Mammary epithelial cell (primary cell): ENCODE measurements at regions of chr10 and their contacts with region 1.

Region 1: GRCh38 chr10:113126229-113127201 is 176.5 kb downstream of the TCF7L2 start:
- DNase-seq: peak; percentile 63
- H3K4me3 ChIP-seq: peak overlapping the region; percentile 21 to 38 (median 29)
- H3K27ac ChIP-seq: peak overlapping the region; percentile 7
- H3K4me1 ChIP-seq: peaks cover 9% of the 10 kb centered on the region
- H3K27me3 ChIP-seq: no peaks in the 10 kb centered on the region
- CTCF ChIP-seq: peak; percentile 49 to 60

Region 2: GRCh38 chr10:112471878-112472487 is 654.5 kb before region 1 on chr10:
- CTCF ChIA-PET with region 1: no interaction called
- dilution Hi-C with region 1: no loop called
- in situ Hi-C with region 1: no loop called
- intact Hi-C with region 1: loop called (anchors 1 kb)
- DNase-seq: peak; percentile 28
- H3K4me3 ChIP-seq: no peak overlapping the region
- H3K27ac ChIP-seq: no peak overlapping the region
- H3K4me1 ChIP-seq: no peaks in the 10 kb centered on the region
- H3K27me3 ChIP-seq: no peaks in the 10 kb centered on the region
- CTCF ChIP-seq: peak; percentile 67 to 68

Region 3: GRCh38 chr10:112689299-112690072 is 437.0 kb before region 1 on chr10:
- CTCF ChIA-PET with region 1: no interaction called
- dilution Hi-C with region 1: no loop called
- in situ Hi-C with region 1: no loop called
- intact Hi-C with region 1: loop called (anchors 1 kb)
- DNase-seq: peak; percentile 1
- H3K4me3 ChIP-seq: no peak overlapping the region
- H3K27ac ChIP-seq: no peak overlapping the region
- H3K4me1 ChIP-seq: peaks cover 2% of the 10 kb centered on the region
- H3K27me3 ChIP-seq: no peaks in the 10 kb centered on the region
- CTCF ChIP-seq: peak; percentile 18 to 44

Region 4: DNA sequence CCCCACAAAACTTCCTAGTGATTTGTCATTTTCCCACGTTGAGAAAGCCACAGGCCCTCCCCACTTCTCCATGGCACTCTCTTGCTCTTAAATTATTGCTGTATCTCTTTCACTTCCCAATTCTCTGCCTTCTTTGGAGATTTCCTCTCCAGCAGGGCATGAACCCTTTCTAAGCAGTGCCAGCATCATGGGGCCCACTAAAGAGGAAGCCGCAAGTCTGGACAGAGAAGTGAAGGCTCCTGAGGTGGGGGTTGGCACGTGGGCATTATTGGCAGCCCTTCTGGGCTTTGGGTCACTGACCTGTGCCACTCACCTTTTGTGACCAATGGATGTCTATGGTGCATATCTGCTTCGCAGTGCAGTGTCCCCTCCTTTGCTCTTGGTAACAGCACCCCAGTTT is 274.2 kb before region 1 on chr10:
- CTCF ChIA-PET with region 1: no interaction called
- dilution Hi-C with region 1: no loop called
- in situ Hi-C with region 1: no loop called
- intact Hi-C with region 1: loop called (anchors 10 kb)
- DNase-seq: no peak
- H3K4me3 ChIP-seq: no peak overlapping the region
- H3K27ac ChIP-seq: no peak overlapping the region
- H3K4me1 ChIP-seq: peaks cover 3% of the 10 kb centered on the region
- H3K27me3 ChIP-seq: peaks cover 3% of the 10 kb centered on the region
- CTCF ChIP-seq: no peak

Region 5: GRCh38 chr10:113000876-113001598 is 125.5 kb before region 1 on chr10:
- CTCF ChIA-PET with region 1: no interaction called
- dilution Hi-C with region 1: no loop called
- in situ Hi-C with region 1: no loop called
- intact Hi-C with region 1: loop called (anchors 5 kb)
- DNase-seq: peak; percentile 61
- H3K4me3 ChIP-seq: no peak overlapping the region
- H3K27ac ChIP-seq: peak overlapping the region; percentile 60
- H3K4me1 ChIP-seq: peaks cover 13% of the 10 kb centered on the region
- H3K27me3 ChIP-seq: no peaks in the 10 kb centered on the region
- CTCF ChIP-seq: peak; percentile 46 to 64

Region 6: GRCh38 chr10:113052076-113052830 is 74.3 kb before region 1 on chr10:
- CTCF ChIA-PET with region 1: no interaction called
- dilution Hi-C with region 1: no loop called
- in situ Hi-C with region 1: no loop called
- intact Hi-C with region 1: no loop called
- DNase-seq: no peak
- H3K4me3 ChIP-seq: no peak overlapping the region
- H3K27ac ChIP-seq: no peak overlapping the region
- H3K4me1 ChIP-seq: peaks cover 49% of the 10 kb centered on the region
- H3K27me3 ChIP-seq: no peaks in the 10 kb centered on the region
- CTCF ChIP-seq: no peak

Region 7: GRCh38 chr10:113521123-113521795 is 394.7 kb after region 1 on chr10:
- CTCF ChIA-PET with region 1: no interaction called
- dilution Hi-C with region 1: no loop called
- in situ Hi-C with region 1: no loop called
- intact Hi-C with region 1: loop called (anchors 2 kb)
- DNase-seq: peak; percentile 48
- H3K4me3 ChIP-seq: no peak overlapping the region
- H3K27ac ChIP-seq: no peak overlapping the region
- H3K4me1 ChIP-seq: no peaks in the 10 kb centered on the region
- H3K27me3 ChIP-seq: no peaks in the 10 kb centered on the region
- CTCF ChIP-seq: peak; percentile 100